ENCODE measurements at regions of chrX and their contacts with region 1.

Region 1: GRCh38 chrX:119693040-119693995 is at the start of gene SEPTIN6:
- DNase-seq: peak; percentile 60
- H3K4me3 ChIP-seq: peak within 1 kb of the TSS; percentile 46 to 82 (median 65)
- H3K27ac ChIP-seq: peak within 1 kb of the TSS; percentile 23
- H3K4me1 ChIP-seq: peaks cover 7% of the 10 kb centered on the region
- H3K27me3 ChIP-seq: no peaks in the 10 kb centered on the region
- CTCF ChIP-seq: no peak
- POLR2A ChIP-seq: peak; percentile 55
- total RNA-seq, gene SEPTIN6: 22.2 and 31.8 TPM in 2 replicates

Region 2: DNA sequence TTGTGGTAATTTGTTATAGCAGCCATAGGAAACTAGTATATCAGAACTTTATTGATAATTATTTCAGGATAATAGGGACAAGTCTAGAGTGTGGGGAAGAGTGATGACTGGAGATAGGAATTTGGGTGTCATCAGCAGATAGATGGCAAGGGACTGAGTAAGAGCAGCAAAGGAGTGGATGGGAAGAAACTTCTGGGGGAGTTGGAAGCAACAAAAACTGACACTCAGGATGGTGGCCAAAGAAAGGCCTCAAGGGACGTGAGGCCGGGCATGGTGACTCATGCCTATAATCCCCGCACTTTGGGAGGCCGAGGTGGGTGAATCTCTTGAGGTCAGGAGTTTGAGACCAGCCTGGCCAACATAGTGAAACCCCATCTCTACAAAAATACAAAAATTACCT is 234.1 kb before region 1 on chrX:
- CTCF ChIA-PET with region 1: no interaction called
- POLR2A ChIA-PET with region 1: no interaction called
- dilution Hi-C with region 1: no loop called
- intact Hi-C with region 1: no loop called
- DNase-seq: no peak
- H3K4me3 ChIP-seq: no peak overlapping the region
- H3K27ac ChIP-seq: no peak overlapping the region
- H3K4me1 ChIP-seq: no peaks in the 10 kb centered on the region
- H3K27me3 ChIP-seq: no peaks in the 10 kb centered on the region
- CTCF ChIP-seq: no peak
- POLR2A ChIP-seq: no peak

Region 3: GRCh38 chrX:119565107-119565663 is 128.1 kb before region 1 on chrX and contains the start of gene STEEP1:
- CTCF ChIA-PET with region 1: no interaction called
- POLR2A ChIA-PET with region 1: no interaction called
- dilution Hi-C with region 1: no loop called
- intact Hi-C with region 1: no loop called
- DNase-seq: peak; percentile 92
- H3K4me3 ChIP-seq: peak within 1 kb of the TSS; percentile 66 to 95 (median 86)
- H3K27ac ChIP-seq: peak within 1 kb of the TSS; percentile 78
- H3K4me1 ChIP-seq: peaks cover 4% of the 10 kb centered on the region
- H3K27me3 ChIP-seq: no peaks in the 10 kb centered on the region
- CTCF ChIP-seq: no peak
- POLR2A ChIP-seq: peak; percentile 46
- total RNA-seq, gene STEEP1: 21.0 and 23.1 TPM in 2 replicates

Region 4: DNA sequence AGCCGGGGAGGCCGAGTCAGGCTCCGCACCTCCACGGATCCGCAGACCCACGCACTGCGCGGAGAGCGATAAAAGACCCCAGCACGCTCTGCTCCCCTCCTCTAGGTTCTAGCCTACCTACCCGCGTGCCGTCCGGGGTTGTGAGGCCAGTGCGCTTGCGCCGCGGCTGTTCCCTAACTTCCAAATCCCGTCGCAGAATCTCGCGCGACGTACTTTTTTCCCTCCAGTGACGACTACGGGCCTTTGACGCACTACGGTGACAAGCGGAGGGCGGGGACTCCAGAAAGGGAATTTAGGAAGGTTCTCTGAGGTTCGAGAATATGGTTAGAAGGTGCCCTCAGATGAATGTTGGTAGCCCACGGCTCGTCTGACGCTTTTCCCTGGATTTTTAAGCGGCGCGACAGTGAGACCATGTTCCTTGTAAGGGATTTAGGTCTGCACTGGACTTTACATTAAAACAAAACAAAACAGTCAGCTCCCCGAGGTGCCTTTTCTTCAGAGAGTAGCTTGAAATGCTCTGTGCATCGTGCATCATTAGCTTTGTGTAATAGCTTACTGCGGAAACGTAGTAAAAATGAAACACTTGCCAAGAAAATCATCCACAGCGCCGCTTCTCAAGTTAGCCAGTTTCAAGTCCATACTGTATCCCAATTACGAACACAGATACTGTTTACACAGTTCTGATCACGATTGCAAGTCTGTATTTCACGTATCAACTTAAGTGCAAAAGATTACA is 86.9 kb before region 1 on chrX and contains the start of gene NKRF:
- CTCF ChIA-PET with region 1: interaction called, 32 read pairs
- POLR2A ChIA-PET with region 1: interaction called, 4 read pairs
- dilution Hi-C with region 1: no loop called
- intact Hi-C with region 1: loop called (anchors 1 kb)
- DNase-seq: peak; percentile 92
- H3K4me3 ChIP-seq: peak within 1 kb of the TSS; percentile 16 to 63 (median 54)
- H3K27ac ChIP-seq: peak within 1 kb of the TSS; percentile 63
- H3K4me1 ChIP-seq: peaks cover 2% of the 10 kb centered on the region
- H3K27me3 ChIP-seq: peaks cover 0 to 3% of the 10 kb centered on the region in 2 experiments
- CTCF ChIP-seq: no peak
- POLR2A ChIP-seq: peak; percentile 78
- total RNA-seq, gene NKRF: 10.8 and 12.0 TPM in 2 replicates

Region 5: GRCh38 chrX:119617517-119618164 is 75.7 kb before region 1 on chrX:
- CTCF ChIA-PET with region 1: interaction called, 5 read pairs
- POLR2A ChIA-PET with region 1: no interaction called
- dilution Hi-C with region 1: no loop called
- intact Hi-C with region 1: loop called (anchors 2 kb)
- DNase-seq: no peak
- H3K4me3 ChIP-seq: no peak overlapping the region
- H3K27ac ChIP-seq: no peak overlapping the region
- H3K4me1 ChIP-seq: peaks cover 7% of the 10 kb centered on the region
- H3K27me3 ChIP-seq: no peaks in the 10 kb centered on the region
- CTCF ChIP-seq: no peak
- POLR2A ChIP-seq: no peak

Region 6: GRCh38 chrX:119655125-119655524 is 38.2 kb before region 1 on chrX:
- CTCF ChIA-PET with region 1: no interaction called
- POLR2A ChIA-PET with region 1: interaction called, 4 read pairs
- dilution Hi-C with region 1: no loop called
- intact Hi-C with region 1: loop called (anchors 5 kb)
- DNase-seq: peak; percentile 84
- H3K4me3 ChIP-seq: no peak overlapping the region
- H3K27ac ChIP-seq: peak overlapping the region; percentile 83
- H3K4me1 ChIP-seq: peaks cover 14% of the 10 kb centered on the region
- H3K27me3 ChIP-seq: no peaks in the 10 kb centered on the region
- CTCF ChIP-seq: no peak
- POLR2A ChIP-seq: no peak

Region 7: GRCh38 chrX:119729408-119730201 is 36.3 kb after region 1 on chrX:
- CTCF ChIA-PET with region 1: interaction called, 8 read pairs
- POLR2A ChIA-PET with region 1: no interaction called
- dilution Hi-C with region 1: no loop called
- intact Hi-C with region 1: loop called (anchors 5 kb)
- DNase-seq: peak; percentile 59
- H3K4me3 ChIP-seq: no peak overlapping the region
- H3K27ac ChIP-seq: no peak overlapping the region
- H3K4me1 ChIP-seq: no peaks in the 10 kb centered on the region
- H3K27me3 ChIP-seq: no peaks in the 10 kb centered on the region
- CTCF ChIP-seq: peak; percentile 35 to 50
- POLR2A ChIP-seq: no peak

Region 8: GRCh38 chrX:119752751-119753400 is 59.6 kb after region 1 on chrX:
- CTCF ChIA-PET with region 1: no interaction called
- POLR2A ChIA-PET with region 1: no interaction called
- dilution Hi-C with region 1: no loop called
- intact Hi-C with region 1: no loop called
- DNase-seq: no peak
- H3K4me3 ChIP-seq: no peak overlapping the region
- H3K27ac ChIP-seq: no peak overlapping the region
- H3K4me1 ChIP-seq: no peaks in the 10 kb centered on the region
- H3K27me3 ChIP-seq: no peaks in the 10 kb centered on the region
- CTCF ChIP-seq: no peak
- POLR2A ChIP-seq: no peak